Endothelial cell of umbilical vein (primary cell): ENCODE measurements at regions of chr1 and their contacts with region 1.

Region 1: DNA sequence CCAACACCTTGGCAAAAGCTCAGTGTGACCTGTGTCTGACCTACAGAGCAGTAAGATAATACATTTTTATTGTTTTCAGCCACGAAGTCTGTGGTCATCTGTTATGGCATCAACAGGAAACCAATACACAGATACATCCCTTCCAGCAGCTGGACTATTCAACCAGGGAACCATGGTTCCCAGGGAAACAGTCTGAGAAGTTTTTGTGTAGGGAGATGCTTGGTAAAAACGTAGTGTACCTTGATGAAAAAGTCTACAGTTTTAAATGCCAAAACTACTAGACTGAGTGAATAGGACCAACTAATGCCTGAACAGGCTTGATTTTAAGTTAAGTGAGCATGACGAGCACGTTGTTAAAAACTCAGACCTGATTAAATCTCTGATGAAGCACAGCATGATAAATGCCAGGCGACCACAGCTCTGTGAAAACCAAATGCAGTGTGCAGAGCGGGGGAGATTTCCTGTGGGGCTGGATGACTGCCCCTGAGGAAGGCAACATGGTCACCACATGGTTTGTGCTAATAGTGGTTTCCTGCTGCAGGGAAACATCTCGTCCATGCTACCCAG is 228.9 kb downstream of the TNR start:
- DNase-seq: peak; percentile 94
- H3K4me3 ChIP-seq: peak overlapping the region in 1 of 3 experiments; percentile 25
- H3K27ac ChIP-seq: peak overlapping the region; percentile 99
- H3K4me1 ChIP-seq: peaks cover 61% of the 10 kb centered on the region
- H3K27me3 ChIP-seq: no peaks in the 10 kb centered on the region
- CTCF ChIP-seq: no peak
- POLR2A ChIP-seq: peak; percentile 22

Region 2: GRCh38 chr1:175192630-175193526 is 321.6 kb before region 1 on chr1 and contains the start of gene KIAA0040:
- CTCF ChIA-PET with region 1: no interaction called
- POLR2A ChIA-PET with region 1: no interaction called
- dilution Hi-C with region 1: no loop called
- intact Hi-C with region 1: loop called (anchors 2 kb)
- DNase-seq: peak; percentile 62
- H3K4me3 ChIP-seq: peak within 1 kb of the TSS; percentile 62 to 93 (median 87)
- H3K27ac ChIP-seq: peak within 1 kb of the TSS; percentile 75
- H3K4me1 ChIP-seq: peaks cover 20% of the 10 kb centered on the region
- H3K27me3 ChIP-seq: no peaks in the 10 kb centered on the region
- CTCF ChIP-seq: peak in 1 of 2 donors; percentile 24
- POLR2A ChIP-seq: no peak
- total RNA-seq, gene KIAA0040: 10.9 and 21.5 TPM in 2 replicates

Region 3: GRCh38 chr1:175498002-175498401 is 16.5 kb before region 1 on chr1:
- CTCF ChIA-PET with region 1: no interaction called
- POLR2A ChIA-PET with region 1: no interaction called
- dilution Hi-C with region 1: no loop called
- intact Hi-C with region 1: no loop called
- DNase-seq: no peak
- H3K4me3 ChIP-seq: no peak overlapping the region
- H3K27ac ChIP-seq: no peak overlapping the region
- H3K4me1 ChIP-seq: peaks cover 10% of the 10 kb centered on the region
- H3K27me3 ChIP-seq: peaks cover 22 to 25% of the 10 kb centered on the region in 2 experiments
- CTCF ChIP-seq: no peak
- POLR2A ChIP-seq: no peak

Region 4: GRCh38 chr1:175536368-175536767 is 21.9 kb after region 1 on chr1:
- CTCF ChIA-PET with region 1: interaction called, 5 read pairs
- POLR2A ChIA-PET with region 1: interaction called, 3 read pairs
- dilution Hi-C with region 1: no loop called
- intact Hi-C with region 1: loop called (anchors 1 kb)
- DNase-seq: peak; percentile 95
- H3K4me3 ChIP-seq: no peak overlapping the region
- H3K27ac ChIP-seq: peak overlapping the region; percentile 91
- H3K4me1 ChIP-seq: peaks cover 30% of the 10 kb centered on the region
- H3K27me3 ChIP-seq: no peaks in the 10 kb centered on the region
- CTCF ChIP-seq: no peak
- POLR2A ChIP-seq: peak; percentile 84

Region 5: DNA sequence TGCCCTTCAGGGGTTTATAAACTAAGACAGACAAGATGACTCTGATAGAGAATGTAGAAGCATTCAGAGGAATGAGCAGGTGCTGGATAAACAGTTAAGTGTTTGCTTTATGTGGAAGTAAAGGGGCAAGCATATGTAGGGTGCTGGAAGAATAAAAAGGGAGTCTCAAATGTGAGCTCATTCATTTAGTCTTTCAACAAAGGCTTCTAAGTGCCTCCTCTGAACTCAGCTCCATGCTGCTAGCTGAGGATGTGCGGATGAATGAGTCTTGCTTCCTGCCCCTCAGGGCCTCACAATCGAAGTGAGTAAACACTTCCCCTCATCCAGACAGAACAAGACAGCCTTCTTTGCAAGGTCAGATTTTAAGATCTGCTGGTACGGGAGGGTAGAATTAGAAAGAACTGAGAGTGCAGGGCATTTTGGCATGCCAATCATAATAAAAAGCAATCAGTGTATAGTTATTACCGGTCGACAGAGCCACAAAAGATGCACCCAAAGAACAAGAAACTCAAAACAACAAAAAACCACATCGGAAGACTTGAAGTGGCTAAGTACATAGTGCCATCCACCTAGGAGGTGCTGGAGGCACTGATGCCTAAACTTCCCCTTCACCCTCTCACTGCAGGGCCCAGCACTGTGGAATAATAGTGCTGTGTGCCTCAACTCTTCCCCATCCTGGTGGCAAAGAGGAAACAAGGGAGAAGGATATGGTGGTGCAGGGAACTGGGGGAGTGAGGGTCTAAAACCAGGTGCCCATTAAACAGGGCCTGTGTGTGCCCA is 159.1 kb after region 1 on chr1:
- CTCF ChIA-PET with region 1: no interaction called
- POLR2A ChIA-PET with region 1: no interaction called
- dilution Hi-C with region 1: no loop called
- intact Hi-C with region 1: loop called (anchors 10 kb)
- DNase-seq: peak; percentile 82
- H3K4me3 ChIP-seq: no peak overlapping the region
- H3K27ac ChIP-seq: peak overlapping the region; percentile 69
- H3K4me1 ChIP-seq: peaks cover 25% of the 10 kb centered on the region
- H3K27me3 ChIP-seq: no peaks in the 10 kb centered on the region
- CTCF ChIP-seq: no peak
- POLR2A ChIP-seq: no peak